Stomach (tissue), 19 donors: ENCODE measurements at regions of chr4 and their contacts with region 1.

Region 1: DNA sequence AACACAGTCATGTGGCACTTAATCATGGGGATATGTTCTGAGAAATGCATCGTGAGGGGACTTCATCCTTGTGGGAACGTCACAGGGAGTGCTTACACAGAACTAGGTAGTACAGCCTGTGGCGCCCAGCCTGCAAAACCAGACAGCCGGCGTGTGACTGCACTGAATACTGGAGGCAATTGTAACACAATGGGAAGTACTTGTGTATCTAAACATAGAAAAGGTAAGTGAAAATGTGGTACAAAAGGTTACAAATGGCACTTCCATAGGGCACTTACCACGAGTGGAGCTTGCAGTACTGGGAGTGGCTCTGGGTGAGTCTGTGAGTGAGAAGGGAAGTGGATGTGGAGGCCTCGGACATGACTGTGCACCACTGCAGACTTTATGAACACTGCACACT is 5.2 kb downstream of the TLR3 start:
- DNase-seq: no peak
- H3K4me3 ChIP-seq: no peak overlapping the region
- H3K27ac ChIP-seq: peak overlapping the region in 1 of 5 donors; percentile 5
- H3K4me1 ChIP-seq: peaks cover 0 to 19% (median 5%) of the 10 kb centered on the region in 4 donors
- H3K27me3 ChIP-seq: no peaks in the 10 kb centered on the region
- CTCF ChIP-seq: no peak
- EP300 ChIP-seq: no peak
- POLR2A ChIP-seq: no peak

Region 2: DNA sequence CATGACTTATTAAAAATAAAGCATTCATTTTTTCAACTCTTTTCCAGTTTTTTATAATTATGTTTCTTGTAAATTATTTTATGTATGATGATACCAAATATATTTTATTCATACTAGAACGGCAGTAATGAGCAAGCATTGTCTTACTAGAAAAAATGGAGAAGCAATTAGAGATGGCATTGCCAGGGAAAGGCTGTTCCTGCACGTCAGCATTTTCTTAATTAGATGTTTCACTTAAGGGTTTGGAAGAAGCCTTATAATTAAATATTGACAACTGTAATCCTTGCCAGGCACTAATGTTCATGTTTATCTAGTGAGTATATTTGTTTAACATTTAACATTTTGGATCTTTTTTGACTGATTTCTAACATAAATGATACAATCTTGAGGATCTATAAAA is 46.9 kb after region 1 on chr4:
- intact Hi-C with region 1: loop called (anchors 10 kb)
- DNase-seq: no peak
- H3K4me3 ChIP-seq: no peak overlapping the region
- H3K27ac ChIP-seq: no peak overlapping the region
- H3K4me1 ChIP-seq: peaks cover 0 to 7% (median 0%) of the 10 kb centered on the region in 4 donors
- H3K27me3 ChIP-seq: no peaks in the 10 kb centered on the region
- CTCF ChIP-seq: no peak
- EP300 ChIP-seq: no peak
- POLR2A ChIP-seq: no peak